ENCODE measurements at regions of chr10 and their contacts with region 1.

Region 1: DNA sequence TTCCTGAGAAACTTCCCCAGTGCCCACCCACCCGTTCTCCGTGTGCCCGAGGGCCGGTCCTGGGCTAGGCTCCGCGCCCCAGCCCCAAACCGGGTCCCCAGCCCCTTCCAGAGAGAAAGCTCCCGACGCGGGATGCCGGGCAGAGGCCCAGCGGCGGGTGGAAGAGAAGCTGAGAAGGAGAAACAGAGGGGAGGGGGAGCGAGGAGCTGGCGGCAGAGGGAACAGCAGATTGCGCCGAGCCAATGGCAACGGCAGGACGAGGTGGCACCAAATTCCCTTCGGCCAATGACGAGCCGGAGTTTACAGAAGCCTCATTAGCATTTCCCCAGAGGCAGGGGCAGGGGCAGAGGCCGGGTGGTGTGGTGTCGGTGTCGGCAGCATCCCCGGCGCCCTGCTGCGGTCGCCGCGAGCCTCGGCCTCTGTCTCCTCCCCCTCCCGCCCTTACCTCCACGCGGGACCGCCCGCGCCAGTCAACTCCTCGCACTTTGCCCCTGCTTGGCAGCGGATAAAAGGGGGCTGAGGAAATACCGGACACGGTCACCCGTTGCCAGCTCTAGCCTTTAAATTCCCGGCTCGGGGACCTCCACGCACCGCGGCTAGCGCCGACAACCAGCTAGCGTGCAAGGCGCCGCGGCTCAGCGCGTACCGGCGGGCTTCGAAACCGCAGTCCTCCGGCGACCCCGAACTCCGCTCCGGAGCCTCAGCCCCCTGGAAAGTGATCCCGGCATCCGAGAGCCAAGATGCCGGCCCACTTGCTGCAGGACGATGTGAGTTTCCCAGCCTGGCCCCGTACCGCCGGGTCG is at the start of gene SCD:
- DNase-seq: peak; percentile 97

Region 2: DNA sequence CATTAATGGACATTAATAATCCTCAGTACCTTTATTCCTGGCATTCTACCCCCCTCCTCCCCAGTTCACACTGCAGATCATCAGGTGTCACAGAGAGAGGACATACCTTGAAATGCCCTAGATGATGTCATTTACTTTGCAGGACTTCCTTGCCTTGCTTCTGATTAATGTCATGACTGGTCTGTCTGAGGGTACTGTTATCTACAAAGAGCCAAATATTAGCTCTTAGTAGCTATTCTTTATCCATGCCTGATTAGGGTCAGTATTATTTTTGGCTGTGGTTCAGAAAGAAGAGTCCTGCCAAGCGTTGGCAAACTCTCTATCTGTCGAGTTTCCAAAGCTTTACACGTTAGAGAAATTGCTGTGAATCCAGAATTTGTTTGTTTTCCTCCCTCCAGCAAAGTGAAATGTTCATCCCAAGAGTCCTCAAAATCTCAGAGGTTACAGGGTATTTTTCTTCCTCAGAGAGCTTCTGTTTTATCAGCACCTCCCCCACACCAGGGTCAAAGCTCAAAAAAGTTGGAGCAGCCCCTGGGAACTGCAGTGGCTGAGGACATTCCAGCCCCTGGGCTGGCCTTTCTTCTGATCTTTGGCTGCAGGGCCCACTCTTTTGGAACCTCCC is 12.7 kb after region 1 on chr10:
- CTCF ChIA-PET with region 1: no interaction called
- POLR2A ChIA-PET with region 1: interaction called, 17 read pairs
- DNase-seq: no peak

Region 3: GRCh38 chr10:100364735-100365391 is 17.9 kb after region 1 on chr10:
- CTCF ChIA-PET with region 1: no interaction called
- POLR2A ChIA-PET with region 1: interaction called, 17 read pairs
- DNase-seq: peak; percentile 44

Region 4: GRCh38 chr10:100373298-100374136 is 26.6 kb after region 1 on chr10:
- CTCF ChIA-PET with region 1: interaction called, 4 read pairs
- POLR2A ChIA-PET with region 1: interaction called, 128 read pairs
- DNase-seq: peak; percentile 95

Region 5: DNA sequence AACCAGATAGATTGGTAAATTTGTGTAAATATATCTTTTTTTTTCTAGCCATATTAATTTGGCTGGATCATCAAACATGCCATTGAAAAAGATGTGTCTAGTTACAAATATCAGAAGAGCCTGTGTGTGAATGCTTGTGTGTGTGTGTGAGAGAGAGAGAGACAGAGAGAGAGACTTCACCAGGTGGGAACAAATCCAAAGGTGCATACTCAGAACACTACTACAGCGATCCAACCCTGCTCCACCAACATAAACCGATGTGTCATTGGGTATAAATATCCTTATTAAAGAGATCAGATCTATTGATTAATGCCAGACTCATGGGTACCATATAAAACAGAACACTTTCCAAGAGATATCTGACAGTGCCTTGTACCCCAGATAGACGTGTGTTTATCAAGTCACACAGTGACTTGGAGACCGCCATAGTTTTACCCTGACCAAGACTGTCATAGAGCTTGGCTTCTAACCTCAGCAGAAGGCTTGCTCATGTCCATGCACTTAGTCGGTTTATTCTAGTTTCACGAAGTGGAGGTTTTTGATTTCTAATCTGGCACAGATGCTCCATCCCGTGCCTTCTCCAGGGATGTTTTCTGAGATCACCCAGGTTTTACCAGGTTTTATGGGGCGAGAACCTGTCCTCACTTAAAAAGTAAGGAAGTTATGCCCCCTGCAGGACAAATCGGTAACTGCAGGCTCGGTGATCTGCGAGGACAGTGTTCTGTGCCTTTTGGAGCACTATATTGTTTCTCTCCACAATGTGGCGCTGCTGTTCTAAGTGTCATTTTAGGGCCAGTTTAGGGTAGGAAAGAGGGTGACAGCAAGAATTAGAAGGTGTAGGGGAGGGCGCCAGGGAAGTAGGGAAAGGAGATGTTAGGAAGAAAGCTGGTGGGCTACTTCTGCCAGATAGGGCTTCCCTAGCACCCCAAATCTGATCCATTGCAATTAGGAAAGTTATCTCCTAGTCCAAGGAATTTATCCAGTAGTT is 86.6 kb after region 1 on chr10:
- CTCF ChIA-PET with region 1: interaction called, 20 read pairs
- POLR2A ChIA-PET with region 1: interaction called, 4 read pairs
- DNase-seq: peak; percentile 90